PC-9 (cell line): ENCODE measurements at regions of chr2 and their contacts with region 1.

Region 1: DNA sequence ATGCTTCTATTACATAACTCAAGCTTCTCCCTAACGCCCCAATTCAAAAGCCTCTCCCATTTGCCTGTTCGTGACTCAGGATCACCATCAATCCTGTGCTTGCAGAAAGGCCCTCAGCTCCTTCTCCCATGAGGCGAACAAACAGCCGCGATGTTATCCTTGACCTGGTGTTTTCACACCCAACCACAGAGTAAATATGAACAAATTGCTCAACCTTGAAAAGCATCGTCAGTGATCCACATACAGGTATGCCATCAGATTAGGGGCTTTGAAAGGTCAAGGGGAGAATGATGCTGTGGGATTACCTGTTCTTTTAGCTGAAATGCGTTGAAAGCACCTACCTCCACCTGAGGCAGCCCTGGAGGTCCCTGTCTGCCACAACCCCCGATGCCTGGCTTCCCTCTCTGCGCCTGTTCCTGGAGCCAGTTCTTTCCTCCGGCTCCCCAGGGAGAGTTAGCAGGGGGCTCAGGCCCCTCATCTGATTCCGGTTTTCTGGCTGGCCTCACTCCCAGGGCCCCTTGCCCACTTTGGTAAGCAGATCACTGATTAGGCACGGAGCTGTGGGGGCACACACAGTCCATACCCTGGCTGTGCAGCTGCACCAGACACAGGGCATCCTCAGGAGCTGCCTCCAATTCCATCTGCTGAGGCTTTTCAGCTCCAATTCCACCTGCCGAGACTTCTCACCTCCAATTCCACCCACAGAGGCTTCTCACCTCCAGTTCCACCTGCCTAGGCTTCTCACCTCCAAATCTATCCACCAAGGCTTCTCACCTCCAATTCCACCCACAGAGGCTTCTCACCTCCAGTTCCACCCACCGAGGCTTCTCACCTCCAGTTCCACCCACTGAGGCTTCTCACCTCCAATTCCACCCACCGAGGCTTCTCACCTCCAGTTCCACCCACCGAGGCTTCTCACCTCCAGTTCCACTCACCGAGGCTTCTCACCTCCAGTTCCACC is 39.3 kb upstream of the ODC1 start:
- DNase-seq: peak; percentile 65 to 99
- H3K4me3 ChIP-seq: no peak overlapping the region; the same call in 1 of the 2 replicates
- H3K27ac ChIP-seq: no peak overlapping the region
- H3K4me1 ChIP-seq: peaks cover 26% of the 10 kb centered on the region
- H3K27me3 ChIP-seq: peaks cover 16% of the 10 kb centered on the region
- CTCF ChIP-seq: no peak

Region 2: DNA sequence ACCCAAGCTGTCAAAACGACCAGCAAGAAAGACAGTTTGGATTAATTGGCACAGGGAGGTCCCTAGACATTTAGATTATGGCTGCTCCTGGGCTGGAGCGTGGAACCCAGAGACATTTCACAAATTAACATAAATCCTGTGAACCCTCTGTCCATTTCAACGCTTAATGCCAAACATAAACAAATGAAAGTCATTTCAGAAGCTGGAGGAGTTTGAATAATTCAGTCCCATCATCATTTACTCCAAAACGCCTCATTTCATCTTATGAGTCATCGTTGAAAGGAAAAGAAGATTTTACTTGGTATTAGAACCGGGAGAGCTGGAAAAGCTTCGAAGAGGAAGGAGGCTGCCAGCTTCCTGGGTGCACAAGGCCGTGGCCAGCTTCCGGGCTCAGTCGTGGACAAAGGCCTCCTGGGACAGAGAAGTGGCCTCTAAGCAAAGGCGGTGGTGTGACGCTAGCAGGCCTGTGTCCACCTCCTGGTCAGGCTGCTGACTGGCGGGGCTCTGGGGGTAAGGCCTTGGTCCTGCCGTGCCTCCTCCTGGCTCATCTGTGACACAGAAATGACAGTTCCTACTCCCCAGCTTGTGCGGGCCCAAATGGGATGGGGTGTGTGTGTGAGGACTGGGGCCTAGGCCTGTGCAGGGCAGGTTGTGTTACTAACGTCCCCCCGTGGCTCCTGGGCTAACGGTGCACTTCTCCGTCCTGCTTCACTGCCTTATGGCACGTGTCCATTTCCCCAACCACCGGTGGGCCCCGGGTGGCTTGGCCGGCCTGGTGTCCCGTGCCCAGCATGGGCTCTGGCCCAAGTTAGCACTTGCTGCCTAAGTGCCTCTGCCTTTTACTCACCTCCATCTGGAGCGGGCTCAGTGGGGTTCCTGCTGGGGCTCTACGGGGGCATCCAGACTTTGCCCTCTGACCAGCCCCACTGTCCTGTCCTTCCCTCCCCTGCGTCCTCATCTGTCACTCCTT is 293.3 kb before region 1 on chr2:
- CTCF ChIA-PET with region 1: no interaction called
- POLR2A ChIA-PET with region 1: no interaction called
- intact Hi-C with region 1: no loop called
- DNase-seq: no peak
- H3K4me3 ChIP-seq: no peak overlapping the region
- H3K27ac ChIP-seq: no peak overlapping the region
- H3K4me1 ChIP-seq: no peaks in the 10 kb centered on the region
- H3K27me3 ChIP-seq: no peaks in the 10 kb centered on the region
- CTCF ChIP-seq: no peak

Region 3: GRCh38 chr2:10460366-10460796 is 27.0 kb before region 1 on chr2:
- CTCF ChIA-PET with region 1: no interaction called
- POLR2A ChIA-PET with region 1: no interaction called
- intact Hi-C with region 1: loop called (anchors 1 kb)
- DNase-seq: peak; percentile 66 to 89
- H3K4me3 ChIP-seq: no peak overlapping the region
- H3K27ac ChIP-seq: no peak overlapping the region
- H3K4me1 ChIP-seq: peaks cover 16% of the 10 kb centered on the region
- H3K27me3 ChIP-seq: no peaks in the 10 kb centered on the region
- CTCF ChIP-seq: no peak